GM18951 (cell line): ENCODE measurements at regions of chr10 and their contacts with region 1.

Region 1: GRCh38 chr10:124388823-124389612 is 29.7 kb downstream of the OAT start:
- POLR2A ChIP-seq: no peak

Region 2: DNA sequence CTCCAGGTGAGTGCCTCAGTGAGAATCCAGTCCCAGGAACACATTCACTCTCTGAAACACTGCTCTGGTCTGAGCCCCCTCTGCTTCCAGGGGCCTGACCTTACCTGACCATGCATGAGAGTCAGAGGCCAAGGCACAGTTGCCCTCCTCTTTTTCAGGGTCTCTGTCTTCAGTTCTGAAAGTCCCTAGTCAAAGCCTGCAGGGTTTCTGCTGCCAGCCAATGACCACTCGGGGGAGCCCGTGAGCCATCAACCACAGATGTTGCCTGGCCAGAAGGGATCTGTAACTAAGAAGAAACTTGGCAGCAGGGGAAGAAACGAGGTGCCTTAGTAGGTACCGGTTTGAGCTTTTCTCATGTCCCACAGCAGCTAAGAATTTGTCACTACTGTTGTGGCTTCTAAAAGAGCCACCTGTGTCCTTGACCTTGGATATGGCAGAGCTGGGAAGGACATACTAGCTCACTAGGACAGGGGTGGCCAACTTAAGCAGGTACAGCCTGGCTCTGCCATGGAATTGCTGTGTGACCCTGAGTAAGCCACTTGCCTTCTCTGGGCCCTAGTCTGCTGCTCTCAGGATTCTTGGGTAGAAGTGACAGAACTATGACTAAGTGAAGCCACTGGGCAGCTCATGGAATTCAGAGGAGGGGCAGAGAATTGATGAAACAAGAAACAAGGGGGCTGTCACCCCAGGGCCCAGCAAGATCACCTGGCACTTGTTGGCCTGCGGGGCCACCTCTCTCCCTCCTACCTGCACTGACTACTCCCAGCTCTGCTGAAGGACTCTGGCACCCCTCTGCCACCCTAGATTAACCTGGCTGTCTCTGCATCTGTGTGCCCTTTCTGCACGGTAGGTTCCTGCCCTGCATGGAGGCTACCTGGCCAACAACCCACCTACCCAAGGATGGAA is 806.7 kb before region 1 on chr10:
- in situ Hi-C with region 1: loop called (anchors 25 kb)
- POLR2A ChIP-seq: no peak

Region 3: GRCh38 chr10:123994417-123995081 is 394.5 kb before region 1 on chr10:
- in situ Hi-C with region 1: loop called (anchors 5 kb)
- POLR2A ChIP-seq: no peak